ENCODE measurements at regions of chr5 and their contacts with region 1.

Region 1: DNA sequence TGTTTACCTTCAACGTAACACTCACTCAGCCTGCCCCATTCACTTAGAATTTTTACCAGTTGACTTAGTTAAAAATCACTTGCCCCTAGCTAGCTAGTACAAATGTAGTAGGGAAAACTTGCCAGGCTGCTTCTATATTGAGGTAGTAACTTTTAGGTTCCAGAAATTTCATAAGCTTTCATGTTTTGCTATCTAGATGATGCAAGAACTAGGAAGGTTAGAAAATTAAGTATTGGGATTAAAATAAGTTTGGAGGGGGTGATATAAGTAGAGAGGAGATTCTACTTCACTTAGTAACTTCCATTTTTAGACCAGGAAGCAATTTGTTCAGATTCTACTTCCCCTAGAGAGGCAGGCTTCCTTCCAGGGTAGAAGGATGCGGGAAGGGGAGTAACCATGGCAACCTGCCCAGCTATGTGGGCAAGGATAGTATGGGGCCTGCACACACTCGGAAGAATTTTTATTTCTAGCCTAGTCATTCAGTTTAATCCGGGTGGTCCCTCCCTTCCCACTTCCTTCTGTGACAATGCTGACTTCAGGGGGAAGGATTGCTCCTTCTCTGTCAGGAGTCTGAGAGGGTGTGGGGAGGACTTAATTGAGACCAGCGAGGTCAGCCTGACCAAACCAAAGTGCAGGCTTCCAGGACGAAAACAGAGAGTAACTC is 4.2 kb downstream of the DAB2 start:
- DNase-seq: no peak
- ATAC-seq: no peak
- H3K4me3 ChIP-seq: no peak overlapping the region
- H3K4me3 Mint-ChIP-seq: no peak overlapping the region
- H3K27ac ChIP-seq: no peak overlapping the region
- H3K27ac Mint-ChIP-seq: peak overlapping the region; percentile 68 to 85
- H3K4me1 ChIP-seq: peaks cover 17% of the 10 kb centered on the region
- H3K4me1 Mint-ChIP-seq: peaks cover 58 to 66% of the 10 kb centered on the region in 2 donors
- H3K27me3 ChIP-seq: no peaks in the 10 kb centered on the region
- H3K27me3 Mint-ChIP-seq: no peaks in the 10 kb centered on the region
- CTCF ChIP-seq: no peak

Region 2: DNA sequence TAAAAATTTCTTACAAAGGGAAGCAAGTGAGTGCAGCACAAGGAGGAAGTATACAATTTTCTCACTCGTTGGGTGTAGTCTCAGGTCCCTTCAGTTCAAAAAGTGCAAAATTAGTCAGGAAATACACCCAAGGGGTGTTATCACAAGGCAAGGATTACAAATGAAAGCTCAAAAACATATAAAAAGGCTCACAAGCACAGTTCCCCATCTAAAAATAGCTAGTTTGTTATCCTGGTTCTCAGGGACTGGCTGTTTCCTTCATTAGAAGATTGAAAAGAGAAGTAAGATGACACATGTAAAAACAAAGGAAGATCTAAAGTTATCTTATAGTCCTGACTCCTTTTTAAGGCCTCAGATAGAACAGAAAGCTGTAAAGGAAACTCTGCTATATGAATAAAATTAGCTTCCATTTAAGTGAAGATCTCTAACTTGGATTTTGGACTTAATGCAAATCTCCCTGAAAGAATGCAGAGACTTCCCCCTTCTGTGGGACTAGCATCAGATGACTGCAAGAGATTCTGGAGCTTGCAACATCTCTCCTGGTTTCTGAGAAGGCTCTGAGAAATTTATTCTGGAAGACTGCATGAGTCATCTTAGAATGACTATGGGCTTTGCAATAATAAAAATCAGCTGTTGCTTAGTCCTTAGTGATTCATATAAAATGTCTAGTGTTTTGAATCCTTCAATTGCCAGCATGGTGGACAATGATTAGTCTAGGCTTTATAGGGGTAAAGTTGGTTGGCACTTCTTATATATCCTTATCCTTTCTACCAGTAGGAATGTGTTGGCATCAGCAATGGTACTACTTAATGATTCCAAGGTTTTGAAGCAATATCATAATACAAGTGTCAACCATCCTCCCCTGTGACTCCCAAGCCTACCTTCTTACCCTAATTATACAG is 21.2 kb before region 1 on chr5:
- intact Hi-C with region 1: loop called (anchors 1 kb)
- DNase-seq: peak in 1 of 2 donors; percentile 13
- ATAC-seq: peak; percentile 85 to 91 (median 87)
- H3K4me3 ChIP-seq: no peak overlapping the region
- H3K4me3 Mint-ChIP-seq: peak overlapping the region; percentile 71
- H3K27ac ChIP-seq: peak overlapping the region; percentile 83
- H3K27ac Mint-ChIP-seq: peak overlapping the region; percentile 96 to 97
- H3K4me1 ChIP-seq: peaks cover 21% of the 10 kb centered on the region
- H3K4me1 Mint-ChIP-seq: peaks cover 58 to 62% of the 10 kb centered on the region in 2 donors
- H3K27me3 ChIP-seq: no peaks in the 10 kb centered on the region
- H3K27me3 Mint-ChIP-seq: no peaks in the 10 kb centered on the region
- CTCF ChIP-seq: no peak

Region 3: DNA sequence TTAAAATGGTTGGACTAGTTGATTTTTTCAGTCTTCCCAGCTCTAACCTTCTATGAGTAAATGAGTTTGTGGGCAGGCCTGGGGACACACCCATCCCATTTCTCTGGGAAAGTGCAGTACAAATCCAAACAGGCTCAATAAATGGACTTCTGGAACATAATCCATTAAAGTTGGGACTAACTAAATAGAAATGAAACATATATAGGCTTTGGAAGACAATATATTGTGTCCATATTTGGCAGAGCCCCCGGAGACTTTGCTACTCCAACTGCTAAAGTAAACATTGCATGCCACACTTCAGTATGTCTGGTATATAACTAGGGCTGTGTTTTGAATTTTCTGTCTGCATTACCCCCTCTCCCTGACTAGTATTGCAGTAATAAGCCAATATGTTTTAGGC is 195.5 kb after region 1 on chr5:
- intact Hi-C with region 1: no loop called
- DNase-seq: no peak
- ATAC-seq: no peak
- H3K4me3 ChIP-seq: no peak overlapping the region
- H3K4me3 Mint-ChIP-seq: no peak overlapping the region
- H3K27ac ChIP-seq: no peak overlapping the region
- H3K27ac Mint-ChIP-seq: no peak overlapping the region
- H3K4me1 ChIP-seq: no peaks in the 10 kb centered on the region
- H3K4me1 Mint-ChIP-seq: no peaks in the 10 kb centered on the region
- H3K27me3 ChIP-seq: no peaks in the 10 kb centered on the region
- H3K27me3 Mint-ChIP-seq: peaks cover 6 to 9% of the 10 kb centered on the region in 2 donors
- CTCF ChIP-seq: no peak

Measured in natural killer cell (primary cell).